ENCODE measurements at regions of chr2 and their contacts with region 1.

Region 1: DNA sequence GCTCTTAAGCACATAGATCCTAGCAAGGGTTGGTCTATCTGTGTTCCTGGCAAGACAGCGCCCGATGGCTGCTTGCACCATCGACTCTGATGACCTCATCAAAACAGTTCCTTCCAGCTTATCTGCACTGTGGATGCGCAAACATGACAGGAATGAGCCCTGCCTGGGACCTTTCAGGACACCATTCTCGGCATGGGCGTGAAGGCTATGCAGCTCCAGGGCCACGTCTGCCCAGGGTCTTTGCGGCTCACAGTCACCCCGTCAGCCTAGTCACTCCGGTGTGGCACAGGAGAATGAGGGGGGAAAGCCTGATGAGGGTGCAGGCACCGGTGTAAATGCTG is 147.8 kb upstream of the TWIST2 start:
- DNase-seq: no peak

Region 2: DNA sequence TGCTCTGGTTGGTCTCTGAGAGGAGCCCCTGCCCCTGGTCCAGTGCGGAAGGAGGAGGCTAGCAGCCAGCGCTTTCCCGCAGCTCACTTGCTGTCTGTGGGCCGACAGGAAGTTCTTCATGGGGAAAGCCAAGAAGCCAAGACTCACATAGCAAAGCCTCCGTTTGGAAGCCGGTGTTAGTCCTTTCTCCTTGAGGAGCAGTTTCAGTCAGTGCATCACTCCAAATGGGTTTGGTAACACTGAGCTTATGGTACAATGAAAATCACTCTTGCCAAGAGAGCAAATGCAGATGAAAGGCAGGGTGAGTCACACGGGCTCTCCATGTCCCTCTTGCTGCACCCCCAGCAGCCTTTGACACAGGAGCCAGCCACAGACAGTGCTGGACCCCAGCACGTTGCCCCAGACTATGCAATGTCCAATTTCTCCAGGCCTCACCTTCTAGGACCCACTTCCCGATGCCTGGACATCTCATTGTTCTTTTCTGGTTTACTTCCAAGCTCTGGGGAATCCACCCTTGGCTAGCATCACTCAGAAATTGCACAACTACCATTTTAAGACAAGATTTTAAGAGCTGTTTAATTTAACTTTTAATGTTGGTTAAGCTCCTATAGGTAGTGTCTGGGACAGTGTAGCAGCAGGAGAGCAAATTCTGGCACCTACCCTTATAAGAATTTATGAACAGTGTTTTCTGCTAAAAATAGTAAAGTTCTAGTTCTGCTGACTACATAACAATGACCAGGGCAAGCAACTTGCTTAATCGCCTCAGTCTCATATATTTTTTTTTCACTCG is 98.5 kb before region 1 on chr2:
- intact Hi-C with region 1: loop called (anchors 5 kb)
- DNase-seq: no peak

Region 3: DNA sequence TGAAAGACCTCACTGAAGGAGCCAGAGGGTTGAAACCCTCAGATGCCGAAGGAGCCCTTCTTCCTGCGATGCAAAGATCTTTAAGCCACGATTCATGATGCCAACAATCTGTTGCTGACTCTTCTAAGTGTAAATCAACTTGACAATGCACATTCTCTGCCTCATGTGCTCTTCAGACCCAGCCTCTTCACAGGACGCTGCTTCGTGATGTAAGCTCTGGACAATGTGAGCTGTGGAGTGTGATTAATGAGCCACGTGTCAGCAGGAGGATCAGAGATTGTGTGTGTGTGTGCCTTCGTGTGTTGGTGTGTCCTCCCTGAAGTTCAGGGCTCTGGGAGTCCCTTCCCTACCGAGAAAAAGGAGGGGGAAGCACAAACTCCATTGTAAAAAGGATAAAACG is 121.3 kb after region 1 on chr2:
- intact Hi-C with region 1: no loop called
- DNase-seq: no peak

Measured in cardiac septum (tissue), 1 donor.